PC-9 (cell line): ENCODE measurements at regions of chr13 and their contacts with region 1.

Region 1: GRCh38 chr13:24727731-24728601 is 36.0 kb upstream of the RNF17 start:
- DNase-seq: peak; percentile 51 to 59
- H3K4me3 ChIP-seq: no peak overlapping the region
- H3K27ac ChIP-seq: no peak overlapping the region
- H3K4me1 ChIP-seq: no peaks in the 10 kb centered on the region
- H3K27me3 ChIP-seq: no peaks in the 10 kb centered on the region
- CTCF ChIP-seq: peak; percentile 79

Region 2: GRCh38 chr13:24614306-24615080 is 113.5 kb before region 1 on chr13:
- CTCF ChIA-PET with region 1: interaction called, 10 read pairs
- POLR2A ChIA-PET with region 1: no interaction called
- intact Hi-C with region 1: loop called (anchors 5 kb)
- DNase-seq: no peak
- H3K4me3 ChIP-seq: no peak overlapping the region
- H3K27ac ChIP-seq: no peak overlapping the region
- H3K4me1 ChIP-seq: no peaks in the 10 kb centered on the region
- H3K27me3 ChIP-seq: no peaks in the 10 kb centered on the region
- CTCF ChIP-seq: no peak

Region 3: GRCh38 chr13:24671386-24672107 is 56.4 kb before region 1 on chr13:
- CTCF ChIA-PET with region 1: no interaction called
- POLR2A ChIA-PET with region 1: no interaction called
- intact Hi-C with region 1: loop called (anchors 5 kb)
- DNase-seq: peak; percentile 62 to 95
- H3K4me3 ChIP-seq: peak overlapping the region; percentile 49; the same call in 1 of the 2 replicates
- H3K27ac ChIP-seq: peak overlapping the region; percentile 88
- H3K4me1 ChIP-seq: peaks cover 45% of the 10 kb centered on the region
- H3K27me3 ChIP-seq: no peaks in the 10 kb centered on the region
- CTCF ChIP-seq: peak; percentile 82

Region 4: GRCh38 chr13:24931450-24932251 is 203.7 kb after region 1 on chr13:
- CTCF ChIA-PET with region 1: no interaction called
- POLR2A ChIA-PET with region 1: no interaction called
- intact Hi-C with region 1: no loop called
- DNase-seq: no peak
- H3K4me3 ChIP-seq: no peak overlapping the region
- H3K27ac ChIP-seq: no peak overlapping the region
- H3K4me1 ChIP-seq: no peaks in the 10 kb centered on the region
- H3K27me3 ChIP-seq: peaks cover 6% of the 10 kb centered on the region; the same call in 1 of the 2 replicates
- CTCF ChIP-seq: no peak

Region 5: GRCh38 chr13:24982333-24982999 is 254.5 kb after region 1 on chr13:
- CTCF ChIA-PET with region 1: interaction called, 10 read pairs
- POLR2A ChIA-PET with region 1: no interaction called
- intact Hi-C with region 1: no loop called
- DNase-seq: peak in 1 of 2 experiments; percentile 23
- H3K4me3 ChIP-seq: no peak overlapping the region
- H3K27ac ChIP-seq: no peak overlapping the region
- H3K4me1 ChIP-seq: no peaks in the 10 kb centered on the region
- H3K27me3 ChIP-seq: no peaks in the 10 kb centered on the region
- CTCF ChIP-seq: no peak